H1 (cell line): ENCODE measurements at regions of chr13 and their contacts with region 1.

Region 1: GRCh38 chr13:77002590-77003190 is 10.8 kb downstream of the CLN5 start:
- DNase-seq: no peak
- H3K4me3 ChIP-seq: no peak overlapping the region
- H3K27ac ChIP-seq: no peak overlapping the region
- H3K4me1 ChIP-seq: no peaks in the 10 kb centered on the region
- H3K27me3 ChIP-seq: no peaks in the 10 kb centered on the region
- CTCF ChIP-seq: peak in 2 of 3 experiments; percentile 47 to 65; a peak in 2 of 4 replicates
- EP300 ChIP-seq: no peak
- POLR2A ChIP-seq: no peak
- RAD21 ChIP-seq: peak; percentile 47 to 59

Region 2: GRCh38 chr13:76790980-76791819 is 211.5 kb before region 1 on chr13:
- CTCF ChIA-PET with region 1: no interaction called
- POLR2A ChIA-PET with region 1: no interaction called
- DNase-seq: peak in 1 of 2 experiments; percentile 1
- H3K4me3 ChIP-seq: no peak overlapping the region
- H3K27ac ChIP-seq: no peak overlapping the region
- H3K4me1 ChIP-seq: peaks cover 0 to 4% (median 2%) of the 10 kb centered on the region in 4 experiments; a peak in 2 of 7 replicates
- H3K27me3 ChIP-seq: no peaks in the 10 kb centered on the region
- CTCF ChIP-seq: no peak
- EP300 ChIP-seq: no peak
- POLR2A ChIP-seq: no peak
- RAD21 ChIP-seq: no peak

Region 3: DNA sequence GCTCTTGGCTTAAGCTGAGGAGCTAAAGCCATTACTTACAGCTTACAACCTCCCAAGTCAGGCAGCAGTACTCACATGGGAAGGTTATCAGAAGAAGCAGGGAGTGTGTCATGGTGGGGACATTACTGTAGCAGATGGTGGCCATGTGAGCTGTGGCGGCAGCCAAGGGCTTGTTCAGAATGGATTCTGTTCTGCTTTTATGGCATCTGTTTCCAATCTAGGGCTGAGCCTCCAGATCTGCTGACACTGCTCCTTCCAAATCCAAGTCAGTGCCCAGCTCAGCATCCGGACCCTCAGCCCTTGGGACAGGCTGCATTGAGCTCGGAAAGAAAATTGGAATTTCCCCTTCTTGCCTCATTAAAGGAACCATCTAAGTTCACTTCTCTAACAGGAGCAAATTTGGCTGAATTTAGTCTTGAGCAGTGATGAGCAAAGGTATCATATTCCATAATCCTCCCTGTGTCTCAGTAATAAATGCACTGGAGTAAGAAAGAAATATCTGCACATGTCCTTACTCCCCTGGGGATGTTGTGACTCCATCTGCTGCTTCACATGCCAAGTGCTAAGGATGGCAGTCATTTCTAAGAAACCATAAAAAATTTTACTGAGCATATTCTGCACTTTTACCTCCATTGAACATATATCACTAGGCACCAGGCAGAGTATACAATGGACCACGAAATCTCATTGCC is 190.3 kb before region 1 on chr13:
- CTCF ChIA-PET with region 1: no interaction called
- POLR2A ChIA-PET with region 1: no interaction called
- DNase-seq: no peak
- H3K4me3 ChIP-seq: no peak overlapping the region
- H3K27ac ChIP-seq: no peak overlapping the region
- H3K4me1 ChIP-seq: no peaks in the 10 kb centered on the region
- H3K27me3 ChIP-seq: peaks cover 0 to 1% (median 0%) of the 10 kb centered on the region in 4 experiments; a peak in 1 of 7 replicates
- CTCF ChIP-seq: no peak
- EP300 ChIP-seq: no peak
- POLR2A ChIP-seq: no peak
- RAD21 ChIP-seq: no peak

Region 4: DNA sequence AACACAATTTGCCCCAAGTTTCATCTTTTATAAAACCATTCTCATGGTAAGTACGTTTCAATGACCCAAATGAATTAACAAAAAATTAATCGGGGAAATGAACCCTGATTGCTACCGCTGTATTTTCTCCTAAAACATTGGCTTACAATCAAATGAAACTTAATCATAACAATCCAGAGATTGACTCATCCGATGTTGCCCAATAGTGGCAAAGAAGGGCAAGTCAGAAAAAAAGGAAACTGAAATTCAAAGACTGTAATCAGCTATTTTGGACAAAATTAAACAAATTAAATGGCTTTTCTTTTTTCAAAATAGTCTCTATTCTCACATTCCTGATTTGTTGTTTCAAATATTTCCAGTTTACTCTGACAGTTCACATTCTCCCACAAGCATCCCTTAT is 58.2 kb before region 1 on chr13:
- CTCF ChIA-PET with region 1: no interaction called
- POLR2A ChIA-PET with region 1: no interaction called
- DNase-seq: no peak
- H3K4me3 ChIP-seq: no peak overlapping the region
- H3K27ac ChIP-seq: no peak overlapping the region
- H3K4me1 ChIP-seq: no peaks in the 10 kb centered on the region
- H3K27me3 ChIP-seq: no peaks in the 10 kb centered on the region
- CTCF ChIP-seq: no peak
- EP300 ChIP-seq: no peak
- POLR2A ChIP-seq: no peak
- RAD21 ChIP-seq: no peak

Region 5: DNA sequence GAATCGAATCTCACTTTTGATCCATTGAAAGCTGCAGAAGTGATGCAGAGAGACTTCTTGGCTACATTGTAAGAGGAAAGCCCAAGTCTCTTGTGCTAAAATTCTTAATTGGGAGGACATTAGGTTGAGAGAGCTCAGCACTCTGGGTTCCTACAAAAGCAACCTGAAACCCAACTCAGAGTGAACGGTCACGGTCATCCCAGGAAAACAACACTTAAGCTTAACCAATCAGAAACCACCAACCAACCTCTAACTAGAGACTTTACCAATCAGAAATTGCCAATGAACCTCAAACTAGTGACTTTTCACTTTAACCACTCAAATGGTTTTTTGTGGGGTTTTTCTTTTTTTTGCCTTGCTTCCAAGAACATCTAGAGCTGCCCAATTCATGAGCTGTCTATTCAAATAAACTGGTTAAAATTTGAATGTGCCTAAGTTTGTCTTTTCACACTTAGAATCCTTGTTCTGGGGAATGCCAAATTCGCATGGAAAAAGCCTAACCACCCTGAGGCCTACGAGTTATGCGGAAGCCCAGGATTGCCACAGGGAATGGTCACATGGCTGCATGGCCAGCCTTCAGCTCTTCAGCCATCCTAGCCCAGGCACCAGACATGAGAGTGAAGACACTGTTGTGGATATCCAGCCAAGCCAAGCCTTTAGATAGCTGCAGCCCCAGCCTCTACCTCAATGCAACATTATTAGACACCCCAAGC is 28.6 kb before region 1 on chr13:
- CTCF ChIA-PET with region 1: no interaction called
- POLR2A ChIA-PET with region 1: no interaction called
- DNase-seq: no peak
- H3K4me3 ChIP-seq: no peak overlapping the region
- H3K27ac ChIP-seq: no peak overlapping the region
- H3K4me1 ChIP-seq: 0 out of 7 replicates have a peak, but pooled peaks cover 0 to 2% (median 0%) of the 10 kb centered on the region in 4 experiments
- H3K27me3 ChIP-seq: no peaks in the 10 kb centered on the region
- CTCF ChIP-seq: no peak
- EP300 ChIP-seq: no peak
- POLR2A ChIP-seq: no peak
- RAD21 ChIP-seq: no peak

Region 6: GRCh38 chr13:76991796-76992547 is 10.7 kb before region 1 on chr13 and contains the start of gene CLN5:
- CTCF ChIA-PET with region 1: interaction called, 26 read pairs
- POLR2A ChIA-PET with region 1: interaction called, 8 read pairs
- DNase-seq: peak; percentile 78 to 91
- H3K4me3 ChIP-seq: peak within 1 kb of the TSS; percentile 66 to 87 (median 82)
- H3K27ac ChIP-seq: peak within 1 kb of the TSS; percentile 55; the same call in 1 of the 2 replicates
- H3K4me1 ChIP-seq: peaks cover 0 to 8% (median 4%) of the 10 kb centered on the region in 4 experiments; a peak in 4 of 7 replicates
- H3K27me3 ChIP-seq: no peaks in the 10 kb centered on the region; a peak in 1 of 7 replicates
- CTCF ChIP-seq: peak in 1 of 3 experiments; percentile 15; a peak in 1 of 4 replicates
- EP300 ChIP-seq: peak in 1 of 2 experiments; percentile 21; a peak in 1 of 3 replicates
- POLR2A ChIP-seq: peak; percentile 88 to 96
- RAD21 ChIP-seq: peak in 1 of 2 experiments; percentile 8; a peak in 1 of 4 replicates
- total RNA-seq, gene CLN5: 6.5 and 10.1 TPM in 2 replicates

Region 7: GRCh38 chr13:77016888-77017623 is 14.4 kb after region 1 on chr13:
- CTCF ChIA-PET with region 1: interaction called, 11 read pairs
- POLR2A ChIA-PET with region 1: interaction called, 4 read pairs
- DNase-seq: no peak
- H3K4me3 ChIP-seq: no peak overlapping the region
- H3K27ac ChIP-seq: no peak overlapping the region
- H3K4me1 ChIP-seq: no peaks in the 10 kb centered on the region
- H3K27me3 ChIP-seq: no peaks in the 10 kb centered on the region
- CTCF ChIP-seq: peak in 1 of 3 experiments; percentile 24; a peak in 2 of 4 replicates
- EP300 ChIP-seq: no peak
- POLR2A ChIP-seq: no peak
- RAD21 ChIP-seq: peak; percentile 16 to 23; a peak in 2 of 4 replicates